ENCODE measurements at regions of chrX and their contacts with region 1.

Region 1: GRCh38 chrX:150508451-150509367 is 59.7 kb upstream of the MTM1 start:
- DNase-seq: peak; percentile 17
- H3K4me3 ChIP-seq: no peak overlapping the region
- H3K27ac ChIP-seq: peak overlapping the region; percentile 50 to 57
- H3K4me1 ChIP-seq: no peaks in the 10 kb centered on the region
- H3K27me3 ChIP-seq: no peaks in the 10 kb centered on the region
- CTCF ChIP-seq: no peak
- POLR2A ChIP-seq: no peak

Region 2: DNA sequence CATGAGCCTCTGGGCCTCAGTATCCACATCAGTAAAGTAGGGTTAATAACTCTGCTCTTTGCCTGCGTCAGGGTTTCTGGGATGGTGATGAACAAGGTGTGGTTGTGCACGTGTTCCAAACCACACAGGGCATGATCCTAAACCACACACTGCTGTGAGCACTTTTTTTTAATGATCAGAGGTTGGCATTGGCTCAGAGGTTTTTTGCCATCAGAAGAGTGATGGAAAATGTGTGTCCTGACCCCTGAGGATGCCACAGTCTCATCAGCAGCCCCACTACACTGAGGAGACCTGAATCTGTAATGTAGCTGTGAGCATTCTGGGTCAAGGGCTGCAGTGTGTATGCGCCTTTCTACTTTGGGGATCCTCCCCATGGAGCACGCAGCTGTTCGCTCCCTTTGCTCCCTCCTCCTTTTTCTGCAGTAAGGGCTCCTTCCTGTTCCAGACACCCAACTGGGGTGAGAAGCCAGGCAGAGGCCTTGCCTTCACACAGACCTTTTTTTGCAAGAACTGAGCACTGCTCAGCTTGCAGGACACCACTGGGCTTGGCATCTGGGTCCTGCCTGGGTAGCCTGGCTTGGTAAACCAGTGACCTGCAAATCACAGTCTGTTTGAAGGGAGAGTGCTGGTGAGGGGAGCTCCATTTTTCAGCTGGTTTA is 58.1 kb before region 1 on chrX:
- intact Hi-C with region 1: no loop called
- DNase-seq: no peak
- H3K4me3 ChIP-seq: no peak overlapping the region
- H3K27ac ChIP-seq: no peak overlapping the region
- H3K4me1 ChIP-seq: no peaks in the 10 kb centered on the region
- H3K27me3 ChIP-seq: no peaks in the 10 kb centered on the region
- CTCF ChIP-seq: no peak
- POLR2A ChIP-seq: no peak

Region 3: DNA sequence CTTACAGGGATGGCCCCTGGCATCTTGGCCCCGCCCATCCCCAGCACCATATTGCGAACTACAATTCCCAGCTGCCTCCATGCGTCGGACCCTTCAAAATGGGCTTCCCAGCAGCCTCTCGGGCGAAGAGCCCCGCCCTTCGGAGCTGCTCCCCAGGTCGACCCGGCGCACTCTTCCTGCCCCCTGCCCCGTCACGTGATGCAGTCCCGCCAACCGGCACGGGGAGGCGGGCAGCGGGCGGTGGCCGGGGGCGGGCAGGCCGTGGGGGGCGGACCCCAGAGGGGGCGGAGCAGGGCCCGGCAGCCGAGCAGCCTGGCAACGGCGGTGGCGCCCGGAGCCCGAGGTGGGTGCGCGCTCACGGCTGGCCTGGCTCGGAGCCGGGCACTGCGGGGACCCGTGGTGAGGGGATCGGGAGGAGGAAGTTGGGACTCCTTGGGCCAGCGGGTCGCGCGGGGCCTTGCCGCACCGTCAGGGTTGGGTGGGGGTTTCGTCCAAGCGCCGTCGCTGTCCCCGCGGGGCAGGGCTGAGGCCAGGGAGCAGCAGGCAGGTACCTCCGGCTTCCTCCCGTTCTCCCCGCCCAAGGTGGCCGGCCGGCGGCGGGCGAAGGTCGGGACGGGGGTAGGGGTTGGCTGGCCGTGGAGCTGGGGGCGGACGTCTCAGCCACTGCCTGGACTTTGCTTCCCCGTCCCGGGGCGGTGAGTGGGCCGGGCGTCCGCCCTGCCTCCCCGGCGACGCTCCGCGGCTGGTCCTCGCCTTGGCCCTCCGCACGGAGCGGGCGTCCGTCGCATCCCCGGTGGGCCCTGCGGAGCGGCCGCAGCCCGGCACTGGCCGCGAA is 59.8 kb after region 1 on chrX and contains the start of gene MTM1:
- intact Hi-C with region 1: loop called (anchors 10 kb)
- DNase-seq: peak; percentile 91
- H3K4me3 ChIP-seq: peak within 1 kb of the TSS; percentile 60
- H3K27ac ChIP-seq: peak within 1 kb of the TSS; percentile 74 to 77
- H3K4me1 ChIP-seq: no peaks in the 10 kb centered on the region
- H3K27me3 ChIP-seq: no peaks in the 10 kb centered on the region
- CTCF ChIP-seq: no peak
- POLR2A ChIP-seq: peak; percentile 81
- total RNA-seq, gene MTM1: 10.3 to 30.2 TPM

Region 4: DNA sequence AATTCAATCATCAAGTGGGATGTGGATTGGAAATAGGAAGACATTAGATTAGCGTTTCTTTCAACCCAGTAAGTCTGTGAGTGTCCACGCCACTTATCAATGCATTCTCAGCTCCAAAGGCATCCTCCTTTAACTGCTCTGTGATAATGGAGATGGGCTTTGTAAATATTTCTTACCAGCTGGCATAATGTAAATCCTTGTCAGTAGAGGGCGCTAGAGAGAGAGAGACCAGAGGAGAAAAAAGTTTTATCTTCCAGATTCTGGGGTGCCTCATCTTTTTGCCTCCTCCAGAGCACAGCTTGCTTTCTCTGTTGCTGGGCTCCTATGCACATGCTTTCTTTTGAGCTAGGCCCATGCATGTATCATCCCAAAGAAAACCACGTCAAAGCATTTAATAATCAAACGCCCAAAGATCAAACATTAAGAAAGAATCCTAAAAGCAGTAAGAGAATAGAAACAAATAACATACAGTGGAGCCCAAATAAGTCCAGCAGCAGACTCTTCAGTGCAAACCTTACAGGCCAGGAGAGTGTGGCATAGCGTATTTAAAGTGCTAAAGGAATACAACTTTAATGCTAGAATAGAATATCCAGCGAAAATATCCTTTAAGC is 174.9 kb after region 1 on chrX:
- intact Hi-C with region 1: loop called (anchors 10 kb)
- DNase-seq: peak; percentile 7
- H3K4me3 ChIP-seq: no peak overlapping the region
- H3K27ac ChIP-seq: no peak overlapping the region
- H3K4me1 ChIP-seq: no peaks in the 10 kb centered on the region
- H3K27me3 ChIP-seq: no peaks in the 10 kb centered on the region
- CTCF ChIP-seq: peak in 3 of 4 experiments; percentile 30 to 49 (median 46)
- POLR2A ChIP-seq: no peak

Measured in prostate gland (tissue), 2 donors.